ENCODE measurements at regions of chr4 and their contacts with region 1.

Region 1: DNA sequence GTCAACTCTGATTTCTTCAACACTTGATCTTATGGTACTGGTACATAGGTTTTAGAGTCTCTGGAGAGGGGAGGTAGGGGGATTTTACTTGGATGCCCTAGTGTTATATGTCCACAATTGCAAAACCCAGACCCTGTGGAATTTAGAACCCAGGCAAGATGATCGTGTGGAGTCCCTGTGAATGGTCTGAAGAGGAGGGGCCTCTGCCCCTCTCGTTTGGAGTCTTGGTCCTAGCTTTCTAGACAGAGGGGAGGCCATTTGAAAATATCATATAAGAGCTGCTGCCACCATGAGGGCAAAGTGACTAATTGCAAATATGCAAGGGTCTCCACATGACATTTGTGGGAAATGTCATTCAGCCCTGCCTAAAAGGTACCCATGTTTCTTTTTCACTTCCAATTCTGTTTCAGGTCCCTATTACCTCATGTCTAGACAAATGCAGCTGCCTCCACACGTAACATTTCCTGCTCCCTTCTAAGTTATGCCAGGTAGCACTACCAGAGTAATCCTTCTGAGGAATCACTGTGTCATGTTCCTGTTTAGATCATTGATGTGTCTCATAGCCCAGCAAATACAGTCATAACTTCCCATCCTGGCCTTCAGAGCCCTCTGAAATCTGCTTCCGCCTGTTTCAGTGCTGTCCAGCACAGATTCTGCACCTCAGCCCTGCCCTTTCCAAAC is 126.8 kb downstream of the KLHL8 start:
- DNase-seq: peak in 8 of 9 experiments; percentile 13 to 69 (median 42)
- ATAC-seq: peak; percentile 92
- H3K4me3 ChIP-seq: no peak overlapping the region
- H3K4me3 Mint-ChIP-seq: no peak overlapping the region
- H3K27ac ChIP-seq: no peak overlapping the region
- H3K27ac Mint-ChIP-seq: peak overlapping the region; percentile 62
- H3K4me1 ChIP-seq: no peaks in the 10 kb centered on the region
- H3K4me1 Mint-ChIP-seq: peaks cover 17% of the 10 kb centered on the region
- H3K27me3 ChIP-seq: no peaks in the 10 kb centered on the region
- H3K27me3 Mint-ChIP-seq: no peaks in the 10 kb centered on the region
- CTCF ChIP-seq: peak; percentile 72

Region 2: DNA sequence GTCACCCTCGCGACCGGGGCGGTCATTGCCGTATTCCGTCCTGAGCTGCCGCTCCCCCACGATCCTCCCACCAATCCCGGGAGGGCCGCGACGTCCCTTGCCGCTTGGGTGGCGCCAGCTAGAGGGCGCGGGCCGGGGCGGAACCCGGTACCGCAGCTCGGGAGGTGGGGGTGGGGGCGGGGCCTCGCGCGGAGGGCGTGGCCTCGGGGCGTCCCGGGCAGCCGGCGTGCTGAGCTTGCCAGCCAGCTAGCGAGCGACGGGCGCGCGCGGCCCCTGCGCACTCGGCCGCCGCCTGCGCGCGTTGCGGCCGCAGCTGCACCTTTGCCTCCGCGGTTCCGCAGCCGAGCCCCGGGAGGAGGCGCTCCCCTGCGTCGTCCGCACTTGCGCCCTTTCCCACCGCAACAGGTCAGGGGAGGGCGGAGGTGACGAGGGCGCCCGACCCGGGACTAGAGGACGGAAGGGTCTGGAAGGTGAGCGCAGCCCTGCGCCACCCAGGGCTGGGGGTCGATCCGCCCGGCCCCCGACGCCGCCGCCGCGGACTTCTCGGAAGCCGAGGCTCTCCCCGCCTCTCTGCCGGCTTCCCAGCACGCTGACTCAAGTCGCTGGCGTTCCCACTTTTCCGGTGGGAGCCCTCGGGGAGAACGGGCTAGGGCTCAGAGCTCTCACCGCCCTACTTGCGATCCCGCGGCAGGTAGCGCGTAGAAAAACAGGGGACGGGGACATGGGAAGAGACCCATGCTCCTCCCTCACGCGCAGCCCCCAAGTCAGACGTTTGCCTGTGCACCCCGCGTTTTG is 158.6 kb before region 1 on chr4 and contains the start of gene AFF1:
- CTCF ChIA-PET with region 1: interaction called, 24 read pairs
- POLR2A ChIA-PET with region 1: interaction called, 4 read pairs
- intact Hi-C with region 1: loop called in 1 of 2 experiments (anchors 1 kb)
- DNase-seq: peak; percentile 74 to 97 (median 85)
- ATAC-seq: peak; percentile 71
- H3K4me3 ChIP-seq: peak within 1 kb of the TSS; percentile 76 to 87
- H3K4me3 Mint-ChIP-seq: peak within 1 kb of the TSS; percentile 88
- H3K27ac ChIP-seq: peak within 1 kb of the TSS; percentile 81 to 85
- H3K27ac Mint-ChIP-seq: peak within 1 kb of the TSS; percentile 95
- H3K4me1 ChIP-seq: peaks cover 42% of the 10 kb centered on the region
- H3K4me1 Mint-ChIP-seq: peaks cover 50% of the 10 kb centered on the region
- H3K27me3 ChIP-seq: no peaks in the 10 kb centered on the region
- H3K27me3 Mint-ChIP-seq: no peaks in the 10 kb centered on the region
- CTCF ChIP-seq: peak; percentile 44
- total RNA-seq, gene AFF1: 32.3 to 33.8 TPM

Region 3: DNA sequence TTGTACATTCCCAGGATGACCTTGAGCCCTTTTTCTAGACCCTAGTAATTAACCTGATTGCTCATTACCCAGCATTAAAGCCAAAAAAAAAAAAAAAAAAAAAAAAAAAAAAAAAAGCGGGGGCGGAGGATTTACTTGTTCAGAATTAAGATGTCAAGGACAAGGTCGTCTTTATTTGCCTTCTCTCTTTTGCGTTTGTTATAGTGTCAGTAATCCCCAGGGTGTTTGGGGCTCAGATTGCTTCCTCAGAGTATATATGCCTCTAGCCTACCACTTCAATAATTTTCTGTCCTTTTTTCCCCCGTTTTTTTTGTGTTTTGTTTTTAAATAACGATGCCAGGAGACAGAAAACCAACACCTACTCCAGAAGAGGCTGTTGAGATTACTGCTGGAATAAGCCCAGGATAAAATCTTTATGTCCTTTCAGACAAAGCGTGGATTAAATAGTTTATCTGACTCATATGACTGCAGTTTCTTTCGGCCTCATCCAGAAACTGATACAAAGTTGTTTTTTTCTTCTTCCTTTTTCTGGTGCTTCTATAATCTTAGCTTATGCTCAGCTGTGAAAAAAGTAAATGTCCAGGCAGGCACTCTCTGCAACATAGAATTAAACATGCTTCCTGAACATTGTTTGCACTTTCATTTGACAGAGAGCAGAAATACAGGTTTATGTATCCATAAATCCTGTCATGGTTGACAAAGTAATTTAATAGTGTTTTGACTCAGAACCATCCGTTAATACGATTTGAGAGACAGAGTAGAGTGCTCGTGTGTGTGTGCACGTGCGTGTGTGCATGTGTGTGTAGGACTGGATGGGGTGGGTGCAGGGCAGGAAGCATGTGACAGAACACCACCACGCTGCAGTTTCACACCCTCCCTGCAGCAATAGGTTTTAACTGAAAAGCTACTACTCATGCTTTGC is 20.1 kb before region 1 on chr4:
- CTCF ChIA-PET with region 1: interaction called, 10 read pairs
- POLR2A ChIA-PET with region 1: no interaction called
- intact Hi-C with region 1: no loop called
- DNase-seq: peak; percentile 2 to 72 (median 47)
- ATAC-seq: peak; percentile 96
- H3K4me3 ChIP-seq: peak overlapping the region; percentile 13 to 26
- H3K4me3 Mint-ChIP-seq: peak overlapping the region; percentile 69
- H3K27ac ChIP-seq: peak overlapping the region in 1 of 2 experiments; percentile 21
- H3K27ac Mint-ChIP-seq: peak overlapping the region; percentile 56
- H3K4me1 ChIP-seq: peaks cover 18% of the 10 kb centered on the region
- H3K4me1 Mint-ChIP-seq: peaks cover 36% of the 10 kb centered on the region
- H3K27me3 ChIP-seq: no peaks in the 10 kb centered on the region
- H3K27me3 Mint-ChIP-seq: no peaks in the 10 kb centered on the region
- CTCF ChIP-seq: no peak

Region 4: DNA sequence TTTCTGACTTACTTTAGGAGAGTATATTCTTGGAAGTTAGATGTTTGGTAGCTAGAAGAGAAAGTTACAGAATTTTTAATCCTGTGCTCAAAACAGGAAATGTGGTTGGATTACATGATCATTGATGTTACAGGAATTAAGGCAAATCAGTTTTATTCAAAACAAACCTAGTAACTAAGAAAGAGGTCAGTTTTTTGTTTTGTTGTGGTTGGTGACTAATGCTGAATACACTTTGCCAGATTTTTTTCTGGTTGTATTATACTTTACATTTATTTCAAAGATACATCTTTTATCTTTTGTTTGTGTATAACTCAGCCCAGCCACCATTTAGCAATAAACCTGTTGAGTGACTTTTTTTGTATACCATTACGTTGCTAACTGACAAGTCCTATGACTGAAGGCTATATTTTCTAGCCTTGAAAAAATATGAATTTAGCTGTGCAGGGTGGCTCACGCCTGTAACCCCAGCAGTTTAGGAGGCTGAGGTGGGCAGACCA is 10.2 kb after region 1 on chr4:
- CTCF ChIA-PET with region 1: interaction called, 10 read pairs
- POLR2A ChIA-PET with region 1: no interaction called
- intact Hi-C with region 1: no loop called
- DNase-seq: peak in 2 of 9 experiments; percentile 45 to 69
- ATAC-seq: peak; percentile 79
- H3K4me3 ChIP-seq: no peak overlapping the region
- H3K4me3 Mint-ChIP-seq: peak overlapping the region; percentile 57
- H3K27ac ChIP-seq: peak overlapping the region; percentile 53 to 68
- H3K27ac Mint-ChIP-seq: peak overlapping the region; percentile 87
- H3K4me1 ChIP-seq: peaks cover 29% of the 10 kb centered on the region
- H3K4me1 Mint-ChIP-seq: peaks cover 46% of the 10 kb centered on the region
- H3K27me3 ChIP-seq: no peaks in the 10 kb centered on the region
- H3K27me3 Mint-ChIP-seq: no peaks in the 10 kb centered on the region
- CTCF ChIP-seq: no peak

Region 5: DNA sequence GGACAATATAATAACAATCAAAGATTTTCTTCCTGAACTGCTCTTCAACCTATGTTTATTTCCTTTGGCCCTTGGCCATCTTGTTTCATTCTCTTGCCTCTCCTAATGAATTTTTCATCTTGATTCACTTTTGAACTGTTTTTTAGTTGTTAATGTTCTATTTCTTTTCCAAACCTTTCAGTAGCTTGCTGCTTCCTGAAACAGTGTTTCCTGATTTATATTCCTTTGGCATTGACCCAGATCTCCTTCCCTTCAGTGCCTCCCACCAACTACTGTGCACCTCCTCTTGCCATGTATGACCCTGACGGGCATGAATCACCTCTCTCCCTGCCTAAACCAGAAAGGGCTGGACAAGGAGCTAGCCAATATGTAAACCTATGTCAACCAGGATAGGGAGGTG is 856.4 kb after region 1 on chr4:
- CTCF ChIA-PET with region 1: no interaction called
- POLR2A ChIA-PET with region 1: no interaction called
- intact Hi-C with region 1: no loop called
- DNase-seq: no peak
- ATAC-seq: no peak
- H3K4me3 ChIP-seq: no peak overlapping the region
- H3K4me3 Mint-ChIP-seq: no peak overlapping the region
- H3K27ac ChIP-seq: no peak overlapping the region
- H3K27ac Mint-ChIP-seq: no peak overlapping the region
- H3K4me1 ChIP-seq: no peaks in the 10 kb centered on the region
- H3K4me1 Mint-ChIP-seq: no peaks in the 10 kb centered on the region
- H3K27me3 ChIP-seq: no peaks in the 10 kb centered on the region
- H3K27me3 Mint-ChIP-seq: peaks cover 5% of the 10 kb centered on the region
- CTCF ChIP-seq: no peak

Measured in CD8-positive, alpha-beta T cell (primary cell).